ENCODE measurements at regions of chr10 and their contacts with region 1.

Region 1: DNA sequence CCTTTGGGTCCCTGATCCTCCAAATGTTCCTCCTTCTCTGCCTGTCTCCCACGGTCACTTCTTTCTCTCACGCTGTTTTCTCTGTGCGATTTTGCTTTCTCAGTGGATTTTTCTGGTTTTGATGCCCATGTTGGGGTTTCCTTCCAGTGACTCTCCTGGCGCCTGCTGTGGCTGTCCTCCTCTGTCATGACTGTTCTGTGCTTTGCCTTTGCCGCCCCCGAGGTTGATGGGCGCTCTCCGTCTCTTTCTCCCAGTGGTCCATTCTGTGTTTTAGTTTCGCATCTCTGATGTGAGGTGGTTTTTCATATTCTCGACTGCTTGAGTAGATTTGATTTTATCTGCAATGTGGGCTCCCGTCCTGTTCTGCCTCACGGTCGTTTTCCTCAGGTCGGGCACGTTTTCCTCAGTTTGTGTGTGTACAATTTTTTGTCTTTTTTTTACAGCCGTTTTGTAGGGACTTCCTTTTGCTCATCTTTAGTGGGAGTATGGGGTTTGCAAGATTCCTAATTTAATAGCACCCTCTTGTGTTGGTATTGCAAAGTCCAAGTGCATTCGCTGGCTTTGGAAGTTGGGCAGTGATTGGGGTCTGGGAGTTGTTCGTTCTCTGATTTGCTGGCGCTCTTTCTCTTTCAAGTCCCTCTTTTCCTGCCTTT is 100.0 kb downstream of the INPP5A start:
- DNase-seq: peak; percentile 76
- ATAC-seq: peak; percentile 70
- H3K4me3 ChIP-seq: no peak overlapping the region
- H3K27ac ChIP-seq: no peak overlapping the region
- H3K4me1 ChIP-seq: peaks cover 7% of the 10 kb centered on the region
- H3K27me3 ChIP-seq: no peaks in the 10 kb centered on the region
- CTCF ChIP-seq: peak; percentile 77

Region 2: DNA sequence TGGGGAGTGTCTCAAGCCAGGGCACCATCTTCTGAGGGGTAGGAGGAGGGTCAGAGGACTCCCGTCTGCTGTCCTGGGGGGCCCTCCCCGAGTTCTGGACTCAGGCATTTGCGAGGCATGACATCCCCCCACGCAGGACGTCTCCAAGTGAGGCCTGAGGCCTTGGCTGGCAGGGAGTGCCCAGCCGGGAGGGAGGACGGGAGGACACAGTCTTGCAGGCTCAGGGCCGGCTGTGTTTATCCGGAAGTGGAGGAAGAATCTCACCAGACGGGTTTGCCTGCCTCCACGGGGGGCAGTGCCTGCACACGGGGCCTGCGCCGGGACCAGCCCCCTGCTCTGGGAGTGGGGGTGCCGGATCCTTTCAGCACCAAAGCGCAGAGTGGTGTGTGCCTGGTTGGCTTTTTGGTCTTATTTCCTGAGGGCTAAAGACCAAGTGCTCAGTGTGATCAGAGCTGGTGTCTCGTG is 229.8 kb before region 1 on chr10:
- CTCF ChIA-PET with region 1: no interaction called
- POLR2A ChIA-PET with region 1: no interaction called
- intact Hi-C with region 1: no loop called
- DNase-seq: peak; percentile 80
- ATAC-seq: peak; percentile 87
- H3K4me3 ChIP-seq: peak overlapping the region; percentile 53; the same call in 1 of the 2 replicates
- H3K27ac ChIP-seq: peak overlapping the region; percentile 80
- H3K4me1 ChIP-seq: peaks cover 23% of the 10 kb centered on the region
- H3K27me3 ChIP-seq: no peaks in the 10 kb centered on the region
- CTCF ChIP-seq: no peak

Region 3: GRCh38 chr10:132458593-132459300 is 178.9 kb before region 1 on chr10:
- CTCF ChIA-PET with region 1: no interaction called
- POLR2A ChIA-PET with region 1: no interaction called
- intact Hi-C with region 1: loop called (anchors 1 kb)
- DNase-seq: peak; percentile 36
- ATAC-seq: peak; percentile 68
- H3K4me3 ChIP-seq: no peak overlapping the region
- H3K27ac ChIP-seq: no peak overlapping the region
- H3K4me1 ChIP-seq: 0 out of 2 replicates have a peak, but pooled peaks cover 5% of the 10 kb centered on the region
- H3K27me3 ChIP-seq: no peaks in the 10 kb centered on the region
- CTCF ChIP-seq: peak; percentile 88

Region 4: DNA sequence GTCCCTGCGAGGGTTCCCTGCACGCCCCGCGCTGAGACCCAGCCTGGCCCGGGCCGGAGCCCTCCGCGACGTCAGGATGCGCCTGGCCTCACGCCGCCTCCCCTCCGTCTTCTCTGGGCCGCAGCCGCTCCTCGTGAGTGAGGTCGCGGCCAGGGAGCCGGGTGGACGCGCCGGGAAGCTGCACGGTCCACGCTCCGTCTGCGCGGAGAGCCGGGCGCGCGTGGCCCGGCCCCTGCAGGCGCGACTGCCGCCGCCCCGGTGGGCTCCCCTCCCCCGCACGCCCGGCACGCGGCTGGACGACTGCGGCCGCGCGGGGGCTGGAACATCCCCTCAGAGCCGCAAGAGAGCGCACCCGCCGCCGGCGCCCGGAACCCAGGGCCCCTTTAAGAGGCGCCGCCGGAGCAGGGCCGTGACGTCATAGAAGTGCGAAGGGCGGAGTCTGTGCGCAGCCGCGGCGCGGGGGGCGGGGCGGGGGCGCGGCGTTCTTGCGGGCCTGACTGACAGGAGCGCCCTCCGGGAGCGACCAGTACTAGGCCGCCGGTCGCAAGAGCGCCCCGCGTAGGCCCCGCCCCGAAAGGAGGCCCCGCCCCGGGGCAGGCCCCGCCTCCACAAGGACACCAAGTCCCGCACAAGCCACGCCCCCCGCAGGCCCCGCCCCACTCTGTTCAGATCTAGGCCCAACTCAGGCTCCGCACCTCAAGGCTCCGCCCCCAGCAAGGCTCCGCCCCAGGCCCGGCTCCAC is 100.5 kb before region 1 on chr10:
- CTCF ChIA-PET with region 1: interaction called, 3 read pairs
- POLR2A ChIA-PET with region 1: no interaction called
- intact Hi-C with region 1: loop called (anchors 1 kb)
- DNase-seq: peak; percentile 97
- ATAC-seq: peak; percentile 66
- H3K4me3 ChIP-seq: peak overlapping the region; percentile 69
- H3K27ac ChIP-seq: peak overlapping the region; percentile 24; the same call in 1 of the 2 replicates
- H3K4me1 ChIP-seq: peaks cover 70% of the 10 kb centered on the region
- H3K27me3 ChIP-seq: no peaks in the 10 kb centered on the region
- CTCF ChIP-seq: no peak